ENCODE measurements at regions of chr9 and their contacts with region 1.

Region 1: GRCh38 chr9:37027582-37028419 is 6.3 kb downstream of the PAX5 start:
- DNase-seq: peak; percentile 85
- ATAC-seq: peak; percentile 78
- H3K4me3 ChIP-seq: peak overlapping the region; percentile 96
- H3K27ac ChIP-seq: peak overlapping the region; percentile 88
- H3K4me1 ChIP-seq: peaks cover 20% of the 10 kb centered on the region
- H3K27me3 ChIP-seq: no peaks in the 10 kb centered on the region
- CTCF ChIP-seq: no peak
- EP300 ChIP-seq: no peak
- POLR2A ChIP-seq: no peak
- RAD21 ChIP-seq: no peak

Region 2: DNA sequence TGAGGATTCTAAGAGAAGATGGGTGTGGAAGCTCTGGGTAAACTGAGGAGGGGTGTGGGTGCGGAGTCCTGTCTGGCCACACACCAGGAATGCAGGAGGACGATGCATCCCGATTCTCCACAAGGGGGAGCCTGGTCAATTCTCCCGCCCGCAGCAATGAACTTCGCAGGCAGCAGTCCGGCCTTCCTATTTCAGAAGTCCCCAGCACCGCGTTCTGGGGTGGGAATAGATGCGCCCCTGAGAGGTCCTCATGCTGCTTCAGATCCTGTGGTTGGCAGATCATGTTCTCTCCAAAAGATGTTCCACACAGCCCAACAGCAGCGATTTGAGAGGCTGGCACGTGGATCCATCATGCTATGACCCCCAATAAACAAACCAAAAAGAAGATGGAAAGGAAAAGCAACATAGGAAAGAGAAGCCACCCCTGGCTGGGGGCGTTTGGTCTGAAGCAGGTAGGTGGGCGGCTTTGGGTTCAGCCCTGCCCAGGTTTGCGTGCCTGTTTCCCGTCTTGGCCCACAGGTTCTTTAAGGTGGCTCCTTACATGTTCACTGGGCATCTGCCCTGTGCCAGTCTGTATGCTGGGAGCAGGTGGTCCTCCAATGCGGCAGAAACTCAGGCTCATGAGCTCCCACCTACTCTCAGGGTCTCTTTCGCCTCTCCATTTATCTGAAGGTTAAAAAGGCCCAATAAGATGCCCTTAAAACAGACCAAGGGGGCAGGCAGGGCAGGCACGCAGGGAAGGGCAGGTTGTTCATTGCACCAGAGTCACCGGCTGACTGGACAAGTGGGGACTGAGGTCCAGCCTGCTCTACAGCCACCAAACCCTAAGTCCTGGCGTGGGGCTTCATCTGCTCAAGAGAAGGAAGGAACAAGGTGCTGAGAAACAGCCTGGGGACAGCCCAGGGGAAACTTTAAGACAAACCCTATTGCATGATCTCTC is 165.3 kb before region 1 on chr9:
- CTCF ChIA-PET with region 1: no interaction called
- POLR2A ChIA-PET with region 1: no interaction called
- RAD21 ChIA-PET with region 1: no interaction called
- SMC1A ChIA-PET with region 1: no interaction called
- in situ Hi-C with region 1: no loop called
- intact Hi-C with region 1: no loop called
- DNase-seq: no peak
- ATAC-seq: no peak
- H3K4me3 ChIP-seq: no peak overlapping the region
- H3K27ac ChIP-seq: no peak overlapping the region
- H3K4me1 ChIP-seq: no peaks in the 10 kb centered on the region; the same call in 1 of the 2 replicates
- H3K27me3 ChIP-seq: no peaks in the 10 kb centered on the region
- CTCF ChIP-seq: peak in 2 of 3 experiments; percentile 25 to 33; a peak in 3 of 6 replicates
- EP300 ChIP-seq: no peak
- POLR2A ChIP-seq: no peak; the same call in 1 of the 2 replicates
- RAD21 ChIP-seq: no peak

Region 3: DNA sequence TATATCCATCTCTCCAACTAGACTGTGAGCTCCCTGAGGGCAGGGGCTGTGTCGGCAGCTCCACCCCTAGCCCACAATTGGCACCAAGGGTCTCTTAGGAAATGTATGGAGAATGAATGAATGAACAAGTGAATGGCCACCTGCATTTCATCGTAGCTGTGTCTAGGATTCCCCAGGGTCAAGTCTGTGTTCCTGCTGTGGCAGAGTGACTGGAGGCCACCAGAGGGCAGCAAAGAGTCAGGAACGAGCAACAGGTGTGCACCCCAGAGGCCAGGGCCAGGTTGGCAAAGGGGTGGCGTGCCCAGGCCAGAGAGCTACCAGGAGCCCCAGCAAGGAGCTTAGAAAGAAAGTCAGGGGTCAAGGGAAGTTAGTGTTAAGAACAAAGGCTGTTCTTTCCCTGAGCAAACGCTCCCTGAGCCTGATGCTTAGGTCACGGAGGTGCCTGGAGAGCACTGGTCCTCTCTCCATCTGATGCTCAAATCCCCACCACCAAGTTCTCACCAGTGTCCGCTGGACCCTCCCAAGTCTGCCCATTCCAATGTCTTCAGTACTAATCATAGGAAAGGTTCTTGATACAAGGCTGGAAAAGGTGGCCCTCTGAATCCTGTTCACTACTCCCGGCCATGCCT is 154.4 kb before region 1 on chr9:
- CTCF ChIA-PET with region 1: interaction called, 3 read pairs
- POLR2A ChIA-PET with region 1: interaction called, 4 read pairs
- RAD21 ChIA-PET with region 1: interaction called, 16 read pairs
- SMC1A ChIA-PET with region 1: interaction called, 8 read pairs
- in situ Hi-C with region 1: loop called (anchors 5 kb)
- intact Hi-C with region 1: no loop called
- DNase-seq: peak; percentile 28
- ATAC-seq: peak; percentile 95
- H3K4me3 ChIP-seq: no peak overlapping the region
- H3K27ac ChIP-seq: no peak overlapping the region
- H3K4me1 ChIP-seq: peaks cover 27% of the 10 kb centered on the region
- H3K27me3 ChIP-seq: no peaks in the 10 kb centered on the region
- CTCF ChIP-seq: peak; percentile 86 to 91 (median 89); a peak in 5 of 6 replicates
- EP300 ChIP-seq: no peak
- POLR2A ChIP-seq: no peak
- RAD21 ChIP-seq: peak; percentile 86

Region 4: DNA sequence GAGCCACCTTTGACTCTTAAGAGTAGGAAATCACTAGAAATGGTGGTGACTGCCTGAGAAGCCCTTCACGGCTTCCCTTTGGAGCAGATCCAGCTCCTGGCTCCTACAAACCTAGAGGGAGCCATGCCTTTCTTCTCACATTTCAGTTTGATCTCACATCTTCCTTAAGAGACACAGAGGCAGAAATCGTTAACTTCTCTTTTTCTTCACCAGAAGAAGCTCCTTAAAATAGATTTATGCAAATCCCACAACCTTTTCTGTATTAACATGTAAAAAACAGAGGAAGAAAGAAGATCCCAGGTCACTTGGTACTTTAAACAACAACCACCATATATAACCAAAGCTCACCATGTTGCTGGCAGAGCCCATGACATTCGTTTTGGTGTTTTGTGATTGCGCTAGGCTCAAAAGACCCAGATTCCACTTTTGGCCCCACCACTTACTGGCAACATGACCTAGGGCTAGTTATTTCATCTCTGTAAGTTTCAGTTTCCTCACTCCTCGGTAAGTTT is 23.3 kb before region 1 on chr9:
- CTCF ChIA-PET with region 1: interaction called, 140 read pairs
- POLR2A ChIA-PET with region 1: interaction called, 354 read pairs
- RAD21 ChIA-PET with region 1: interaction called, 175 read pairs
- SMC1A ChIA-PET with region 1: interaction called, 227 read pairs
- in situ Hi-C with region 1: no loop called
- intact Hi-C with region 1: loop called (anchors 1 kb)
- DNase-seq: no peak
- ATAC-seq: peak; percentile 47
- H3K4me3 ChIP-seq: peak overlapping the region; percentile 27; the same call in 1 of the 2 replicates
- H3K27ac ChIP-seq: peak overlapping the region; percentile 98
- H3K4me1 ChIP-seq: peaks cover 92% of the 10 kb centered on the region
- H3K27me3 ChIP-seq: no peaks in the 10 kb centered on the region
- CTCF ChIP-seq: no peak
- EP300 ChIP-seq: no peak
- POLR2A ChIP-seq: peak; percentile 38
- RAD21 ChIP-seq: no peak

Region 5: GRCh38 chr9:37119907-37120842 is 92.4 kb after region 1 on chr9 and contains the start of gene ZCCHC7:
- CTCF ChIA-PET with region 1: interaction called, 6 read pairs
- POLR2A ChIA-PET with region 1: interaction called, 13 read pairs
- RAD21 ChIA-PET with region 1: interaction called, 9 read pairs
- SMC1A ChIA-PET with region 1: interaction called, 9 read pairs
- in situ Hi-C with region 1: no loop called
- intact Hi-C with region 1: no loop called
- DNase-seq: peak; percentile 89
- ATAC-seq: peak; percentile 94
- H3K4me3 ChIP-seq: peak within 1 kb of the TSS; percentile 93
- H3K27ac ChIP-seq: peak within 1 kb of the TSS; percentile 93
- H3K4me1 ChIP-seq: peaks cover 8% of the 10 kb centered on the region
- H3K27me3 ChIP-seq: no peaks in the 10 kb centered on the region
- CTCF ChIP-seq: no peak
- EP300 ChIP-seq: no peak
- POLR2A ChIP-seq: peak; percentile 92
- RAD21 ChIP-seq: no peak
- polyA plus RNA-seq, gene ZCCHC7: 58.6 to 60.8 TPM

Region 6: DNA sequence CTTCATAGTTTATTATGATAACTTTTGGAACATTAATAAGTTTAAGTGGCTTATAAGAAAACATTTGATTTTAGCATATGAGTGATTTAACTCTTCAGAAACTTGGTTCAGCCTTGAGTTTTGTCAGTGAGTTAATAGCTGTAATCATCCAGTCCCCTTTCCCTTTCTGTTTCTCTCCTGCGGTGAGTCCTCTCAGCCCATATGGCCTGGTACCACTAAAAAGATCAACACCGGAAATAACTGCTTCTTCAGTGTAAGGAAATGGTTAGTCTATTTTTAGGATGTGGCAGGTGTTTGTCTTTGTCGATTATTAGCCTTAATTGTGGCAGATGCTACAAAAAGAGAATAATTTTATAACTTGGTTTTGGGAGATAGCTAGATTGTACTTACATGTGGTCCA is 274.5 kb after region 1 on chr9:
- CTCF ChIA-PET with region 1: interaction called, 3 read pairs
- POLR2A ChIA-PET with region 1: interaction called, 5 read pairs
- RAD21 ChIA-PET with region 1: interaction called, 5 read pairs
- SMC1A ChIA-PET with region 1: interaction called, 7 read pairs
- in situ Hi-C with region 1: loop called (anchors 5 kb)
- intact Hi-C with region 1: loop called (anchors 5 kb)
- DNase-seq: peak; percentile 90
- ATAC-seq: peak; percentile 91
- H3K4me3 ChIP-seq: peak overlapping the region; percentile 43; the same call in 1 of the 2 replicates
- H3K27ac ChIP-seq: peak overlapping the region; percentile 95
- H3K4me1 ChIP-seq: peaks cover 48% of the 10 kb centered on the region
- H3K27me3 ChIP-seq: no peaks in the 10 kb centered on the region
- CTCF ChIP-seq: no peak
- EP300 ChIP-seq: peak; percentile 82 to 93
- POLR2A ChIP-seq: no peak
- RAD21 ChIP-seq: peak; percentile 31; the same call in 1 of the 2 replicates